ENCODE measurements at regions of chr1 and their contacts with region 1.

Region 1: GRCh38 chr1:44807262-44808062 is at the start of gene DYNLT4:
- DNase-seq: peak; percentile 60
- H3K4me3 ChIP-seq: peak within 1 kb of the TSS; percentile 43 to 54; a peak in 3 of 4 replicates
- H3K27ac ChIP-seq: peak within 1 kb of the TSS; percentile 94 to 100
- H3K4me1 ChIP-seq: peaks cover 55 to 84% of the 10 kb centered on the region in 2 experiments; a peak in 3 of 4 replicates
- H3K27me3 ChIP-seq: no peaks in the 10 kb centered on the region
- CTCF ChIP-seq: no peak
- EP300 ChIP-seq: peak in 1 of 2 experiments; percentile 84; a peak in 2 of 4 replicates
- RAD21 ChIP-seq: no peak
- polyA plus RNA-seq, gene DYNLT4: 0.37 and 0.61 TPM in 2 replicates

Region 2: GRCh38 chr1:44819608-44820327 is 12.3 kb after region 1 on chr1:
- CTCF ChIA-PET with region 1: interaction called, 3 read pairs
- POLR2A ChIA-PET with region 1: interaction called, 15 read pairs
- DNase-seq: peak; percentile 86
- H3K4me3 ChIP-seq: peak overlapping the region; percentile 1 to 41; a peak in 3 of 4 replicates
- H3K27ac ChIP-seq: peak overlapping the region; percentile 76 to 95
- H3K4me1 ChIP-seq: peaks cover 5 to 7% of the 10 kb centered on the region in 2 experiments; a peak in 1 of 4 replicates
- H3K27me3 ChIP-seq: no peaks in the 10 kb centered on the region
- CTCF ChIP-seq: no peak
- EP300 ChIP-seq: peak in 1 of 2 experiments; percentile 60; a peak in 1 of 4 replicates
- RAD21 ChIP-seq: no peak

Region 3: DNA sequence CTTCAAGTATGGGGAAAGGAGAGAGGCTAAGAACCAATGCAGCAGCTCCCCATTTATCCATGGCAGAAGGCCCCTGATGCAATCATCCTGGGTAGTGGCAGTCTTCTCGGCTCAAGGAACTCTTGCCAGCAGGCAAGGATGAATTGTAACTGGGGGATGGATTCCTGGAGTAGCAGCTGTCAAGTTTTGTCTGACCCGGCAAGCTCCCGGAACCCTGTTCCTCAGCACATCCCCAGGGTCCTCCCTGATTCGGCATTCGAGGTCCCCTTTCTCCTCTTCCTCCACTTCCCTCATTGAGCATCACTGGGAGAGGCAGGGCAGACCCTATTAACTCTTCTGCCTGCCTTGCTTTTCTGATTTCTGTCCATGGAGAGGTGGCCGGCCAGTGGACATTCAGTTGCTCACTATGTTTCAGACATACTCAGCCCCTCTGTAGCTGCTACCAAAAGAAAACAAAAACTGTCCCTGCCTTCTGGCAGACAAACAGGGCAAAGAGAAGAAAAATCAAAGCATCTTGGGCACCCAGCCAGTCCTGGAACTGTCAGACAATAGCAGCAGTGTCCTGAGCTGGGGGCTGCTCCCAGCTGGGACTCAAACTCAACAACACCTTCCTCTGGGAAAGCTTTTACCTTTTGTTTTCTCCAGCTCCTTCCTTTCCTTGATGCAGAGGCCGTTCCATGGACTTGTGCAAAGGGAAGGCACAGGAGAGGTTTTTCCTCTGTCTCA is 41.2 kb after region 1 on chr1:
- CTCF ChIA-PET with region 1: no interaction called
- POLR2A ChIA-PET with region 1: no interaction called
- DNase-seq: no peak
- H3K4me3 ChIP-seq: no peak overlapping the region
- H3K27ac ChIP-seq: no peak overlapping the region
- H3K4me1 ChIP-seq: no peaks in the 10 kb centered on the region
- H3K27me3 ChIP-seq: no peaks in the 10 kb centered on the region
- CTCF ChIP-seq: no peak
- EP300 ChIP-seq: no peak
- RAD21 ChIP-seq: no peak

Region 4: DNA sequence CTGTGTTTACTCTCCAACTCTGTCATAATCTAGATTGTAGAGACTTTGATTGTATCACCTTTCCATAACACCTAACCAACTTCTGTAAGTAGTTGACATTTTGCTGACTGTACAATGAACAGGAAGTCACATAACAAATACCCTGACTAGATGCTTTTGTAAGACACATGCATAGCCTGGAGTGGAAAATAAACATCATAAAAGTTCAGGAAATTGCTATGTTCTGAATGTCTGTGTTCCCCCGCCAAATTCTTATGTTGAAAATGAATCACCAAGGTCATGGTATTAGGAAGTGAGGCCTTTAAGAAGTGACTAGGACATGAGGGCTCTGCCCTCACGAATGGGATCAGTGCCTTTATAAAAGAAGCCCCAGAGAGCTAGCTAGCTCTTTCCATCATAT is 439.3 kb after region 1 on chr1:
- CTCF ChIA-PET with region 1: no interaction called
- POLR2A ChIA-PET with region 1: no interaction called
- DNase-seq: no peak
- H3K4me3 ChIP-seq: no peak overlapping the region
- H3K27ac ChIP-seq: no peak overlapping the region
- H3K4me1 ChIP-seq: no peaks in the 10 kb centered on the region
- H3K27me3 ChIP-seq: peaks cover 3% of the 10 kb centered on the region; the same call in 1 of the 2 replicates
- CTCF ChIP-seq: no peak
- EP300 ChIP-seq: no peak
- RAD21 ChIP-seq: no peak